ENCODE measurements at regions of chr2 and their contacts with region 1.

Region 1: DNA sequence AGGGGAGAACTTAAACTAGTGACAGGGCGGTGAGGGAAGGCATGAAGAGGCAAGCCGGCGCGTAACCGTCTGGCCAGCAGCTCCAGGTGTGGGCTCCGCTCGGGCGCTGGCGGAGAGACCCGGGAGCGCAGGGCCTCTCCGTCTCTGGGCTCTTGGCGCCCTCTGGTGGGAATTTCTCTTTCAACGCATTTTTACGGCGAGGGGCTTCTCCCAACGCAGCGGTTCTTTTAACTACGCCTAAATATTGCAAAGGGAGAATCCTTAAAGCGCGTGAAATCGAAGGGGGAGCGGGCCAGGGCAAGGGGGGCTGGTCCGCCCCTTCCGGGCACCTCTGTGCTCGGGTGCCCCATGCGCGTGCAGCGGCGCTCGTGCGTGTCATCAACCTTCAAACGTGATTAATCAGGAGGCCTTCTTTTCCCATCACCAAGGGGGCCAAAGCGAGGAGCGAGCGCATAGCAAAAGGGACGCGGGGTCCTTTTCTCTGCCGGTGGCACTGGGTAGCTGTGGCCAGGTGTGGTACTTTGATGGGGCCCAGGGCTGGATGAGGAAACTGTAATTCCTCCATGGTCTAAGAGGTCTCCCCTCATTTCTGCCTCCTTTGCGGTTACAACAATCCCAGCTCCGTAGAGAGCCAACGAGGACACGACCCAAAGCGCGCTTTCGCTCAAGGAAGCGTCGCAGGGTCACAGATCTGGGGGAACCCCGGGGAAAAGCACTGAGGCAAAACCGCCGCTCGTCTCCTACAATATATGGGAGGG is 762 bp upstream of the GAD1 start:
- DNase-seq: peak; percentile 57 to 61
- H3K4me3 ChIP-seq: peak overlapping the region in 1 of 2 donors; percentile 31
- H3K27ac ChIP-seq: no peak overlapping the region
- H3K4me1 ChIP-seq: peaks cover 0 to 24% of the 10 kb centered on the region in 2 donors
- H3K27me3 ChIP-seq: peaks cover 51 to 79% of the 10 kb centered on the region in 2 donors
- CTCF ChIP-seq: peak; percentile 63 to 84 (median 75)
- POLR2A ChIP-seq: no peak

Region 2: GRCh38 chr2:170369894-170370293 is 446.0 kb before region 1 on chr2:
- intact Hi-C with region 1: loop called (anchors 10 kb)
- DNase-seq: no peak
- H3K4me3 ChIP-seq: no peak overlapping the region
- H3K27ac ChIP-seq: no peak overlapping the region
- H3K4me1 ChIP-seq: no peaks in the 10 kb centered on the region
- H3K27me3 ChIP-seq: peaks cover 0 to 17% of the 10 kb centered on the region in 2 donors
- CTCF ChIP-seq: peak in 2 of 4 experiments; percentile 9 to 29
- POLR2A ChIP-seq: no peak

Region 3: DNA sequence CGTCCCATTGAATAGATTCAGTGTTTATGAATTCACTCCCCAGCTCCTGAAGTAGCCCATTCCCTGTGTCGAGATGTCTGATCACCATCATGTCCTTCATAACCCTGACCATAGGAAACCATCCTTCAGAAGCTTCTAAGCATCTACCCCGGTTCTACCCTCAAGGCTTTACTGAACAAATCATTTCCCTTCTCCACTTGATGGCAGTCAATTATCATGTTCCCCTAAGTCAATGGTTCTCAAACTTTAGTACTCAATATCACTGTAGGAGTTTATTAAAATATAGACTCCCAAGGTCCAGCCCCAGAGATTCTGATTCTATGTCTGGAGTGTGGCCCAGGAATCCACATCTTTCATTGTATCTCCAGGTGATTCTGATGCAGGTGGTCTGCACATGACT is 329.2 kb before region 1 on chr2:
- intact Hi-C with region 1: loop called (anchors 10 kb)
- DNase-seq: no peak
- H3K4me3 ChIP-seq: no peak overlapping the region
- H3K27ac ChIP-seq: no peak overlapping the region
- H3K4me1 ChIP-seq: no peaks in the 10 kb centered on the region
- H3K27me3 ChIP-seq: no peaks in the 10 kb centered on the region
- CTCF ChIP-seq: peak in 2 of 4 experiments; percentile 24 to 37
- POLR2A ChIP-seq: no peak

Region 4: GRCh38 chr2:170567429-170567828 is 248.5 kb before region 1 on chr2:
- intact Hi-C with region 1: no loop called
- DNase-seq: no peak
- H3K4me3 ChIP-seq: no peak overlapping the region
- H3K27ac ChIP-seq: no peak overlapping the region
- H3K4me1 ChIP-seq: no peaks in the 10 kb centered on the region
- H3K27me3 ChIP-seq: no peaks in the 10 kb centered on the region
- CTCF ChIP-seq: no peak
- POLR2A ChIP-seq: no peak

Region 5: DNA sequence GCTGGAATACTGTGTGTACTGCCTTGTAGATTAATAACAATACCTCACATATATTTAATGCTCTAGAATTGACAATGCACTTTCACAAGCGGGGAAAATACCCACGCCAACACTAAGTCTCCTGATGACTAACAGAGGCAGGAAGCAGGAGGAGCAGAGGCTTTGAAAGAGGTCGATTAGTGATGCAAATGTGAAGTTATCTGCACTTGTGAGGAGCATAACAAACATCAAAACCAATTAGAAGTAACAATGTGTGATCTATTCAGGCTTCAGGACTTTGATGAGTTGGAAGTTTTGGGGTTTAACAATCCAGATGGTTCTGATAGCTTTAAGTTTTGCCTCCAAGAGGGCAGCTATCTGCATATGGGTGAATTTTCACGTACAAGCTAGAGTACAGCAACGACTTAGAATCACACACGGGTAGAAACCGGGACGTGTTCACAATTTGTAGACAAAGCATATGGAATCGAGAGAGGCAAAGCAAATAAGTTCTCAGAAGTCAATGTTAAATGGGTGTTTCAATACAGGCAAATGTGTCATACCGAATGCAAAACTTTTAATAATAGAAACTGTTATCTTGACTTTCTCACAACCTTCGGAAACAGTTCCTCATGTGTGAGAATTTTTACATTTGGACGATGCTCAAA is 503.4 kb after region 1 on chr2:
- intact Hi-C with region 1: no loop called
- DNase-seq: no peak
- H3K4me3 ChIP-seq: no peak overlapping the region
- H3K27ac ChIP-seq: no peak overlapping the region
- H3K4me1 ChIP-seq: no peaks in the 10 kb centered on the region
- H3K27me3 ChIP-seq: no peaks in the 10 kb centered on the region
- CTCF ChIP-seq: no peak
- POLR2A ChIP-seq: no peak

Measured in uterus (tissue), 4 donors.